ENCODE measurements at regions of chr19 and their contacts with region 1.

Region 1: DNA sequence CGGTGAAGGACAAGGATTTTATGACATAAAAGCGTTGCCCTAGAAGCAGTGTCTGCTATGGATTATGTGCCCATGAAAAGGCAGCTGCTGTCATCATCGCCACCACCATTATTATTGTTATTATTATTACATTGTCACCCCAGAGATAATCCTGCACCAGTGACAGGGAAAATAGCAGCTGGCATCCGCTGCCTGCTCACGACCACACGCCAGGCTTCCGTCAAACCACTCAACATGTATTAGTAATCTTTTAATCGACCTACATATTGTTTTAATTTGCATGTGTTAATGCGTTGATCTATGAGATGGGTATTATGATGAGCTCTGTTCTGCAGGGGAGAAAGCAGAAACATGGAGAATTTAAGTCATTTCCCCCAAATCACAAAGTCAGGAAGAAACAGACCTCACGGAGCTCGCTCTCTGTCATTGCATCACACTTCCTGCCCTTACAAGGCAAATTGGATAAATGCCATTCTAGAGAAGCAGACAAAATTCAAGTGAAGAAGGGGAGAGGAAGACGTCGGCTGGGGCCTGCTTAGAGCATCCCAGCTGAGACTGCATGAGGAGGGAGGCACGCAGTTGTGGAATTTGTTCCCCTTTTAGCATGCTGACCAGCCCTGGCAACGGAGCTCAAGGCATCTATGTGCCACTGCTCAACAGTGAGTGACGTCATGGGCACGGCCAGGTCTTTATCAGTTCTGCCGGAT is at the start of gene FFAR3:
- DNase-seq: peak; percentile 21
- H3K4me3 Mint-ChIP-seq: peak within 1 kb of the TSS; percentile 21
- H3K27ac Mint-ChIP-seq: peak within 1 kb of the TSS; percentile 20
- H3K4me1 Mint-ChIP-seq: peaks cover 14% of the 10 kb centered on the region
- H3K27me3 Mint-ChIP-seq: peaks cover 9% of the 10 kb centered on the region
- total RNA-seq, gene FFAR3: 1.1 TPM

Region 2: DNA sequence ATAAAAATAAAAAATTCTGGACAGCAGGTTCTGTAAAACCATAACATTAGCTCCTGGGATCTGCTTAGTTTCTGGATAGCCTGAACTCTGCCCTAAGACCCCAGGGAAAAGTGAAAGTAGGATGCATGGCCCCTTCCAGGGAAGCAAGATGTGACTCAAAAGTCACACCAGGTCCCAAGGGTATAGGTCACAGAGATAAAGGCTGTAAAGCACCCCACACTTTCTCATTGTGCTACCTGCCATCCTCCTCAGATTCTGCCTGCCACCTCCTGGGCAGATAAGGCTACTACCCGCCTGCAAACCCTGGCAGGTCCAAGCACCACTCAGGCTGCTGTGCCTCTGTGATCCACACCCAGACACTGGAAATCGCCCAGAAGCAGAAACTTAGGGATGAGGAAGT is 110.6 kb after region 1 on chr19:
- CTCF ChIA-PET with region 1: interaction called, 101 read pairs
- POLR2A ChIA-PET with region 1: interaction called, 4 read pairs
- intact Hi-C with region 1: no loop called
- DNase-seq: peak; percentile 77
- H3K4me3 Mint-ChIP-seq: no peak overlapping the region
- H3K27ac Mint-ChIP-seq: peak overlapping the region; percentile 20
- H3K4me1 Mint-ChIP-seq: peaks cover 7% of the 10 kb centered on the region
- H3K27me3 Mint-ChIP-seq: no peaks in the 10 kb centered on the region

Region 3: GRCh38 chr19:35609851-35610353 is 251.9 kb after region 1 on chr19:
- CTCF ChIA-PET with region 1: no interaction called
- POLR2A ChIA-PET with region 1: no interaction called
- intact Hi-C with region 1: no loop called
- DNase-seq: peak; percentile 59
- H3K4me3 Mint-ChIP-seq: no peak overlapping the region
- H3K27ac Mint-ChIP-seq: peak overlapping the region; percentile 82
- H3K4me1 Mint-ChIP-seq: peaks cover 31% of the 10 kb centered on the region
- H3K27me3 Mint-ChIP-seq: peaks cover 1% of the 10 kb centered on the region